ENCODE measurements at regions of chr10 and their contacts with region 1.

Region 1: DNA sequence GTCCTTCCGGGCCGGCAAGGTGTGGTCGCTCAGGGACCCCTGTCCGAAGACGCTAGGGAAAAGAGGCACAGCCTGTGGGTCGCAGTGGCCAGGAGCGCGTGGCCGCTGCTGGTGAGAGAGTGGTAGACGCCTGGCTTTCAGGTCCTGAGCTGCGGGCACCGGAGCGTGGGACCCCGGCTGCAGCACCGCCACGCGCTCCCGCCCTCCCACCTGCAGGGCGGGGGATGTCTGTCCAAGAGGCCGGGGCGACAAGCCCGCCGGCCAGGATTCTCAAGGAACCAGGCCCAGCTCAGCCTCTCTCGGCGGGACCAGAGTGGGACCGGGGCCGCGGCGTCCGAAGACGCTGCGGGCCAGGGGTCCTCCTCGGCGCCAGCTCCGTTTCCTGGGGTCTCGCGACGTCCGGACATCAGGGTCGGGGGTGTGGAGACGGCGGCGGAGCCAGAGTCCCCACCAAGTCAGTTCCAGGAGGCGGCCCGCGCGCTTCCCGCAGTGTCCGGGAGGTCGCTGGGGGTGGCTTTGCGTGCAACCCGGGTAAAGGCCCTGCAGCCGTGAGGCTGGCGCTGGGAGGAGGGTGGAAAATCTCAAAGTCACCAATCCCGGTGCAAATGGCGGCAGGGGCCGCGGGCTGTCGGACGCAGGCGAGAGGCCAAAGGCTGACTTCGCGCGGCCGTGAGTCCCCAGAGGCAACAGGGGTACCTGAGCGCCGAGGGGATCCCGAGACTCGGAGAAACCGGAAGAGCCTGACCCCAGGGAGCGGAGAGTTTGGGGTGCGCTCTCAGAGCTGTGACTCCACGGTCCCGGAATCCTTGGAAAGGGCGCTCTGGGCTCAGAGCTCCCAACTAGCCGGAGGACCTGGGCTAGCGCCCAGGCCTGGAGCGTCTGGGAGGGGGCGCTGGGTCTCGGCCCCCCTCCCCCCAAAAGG is 5.4 kb downstream of the ZNF503 start:
- DNase-seq: no peak
- ATAC-seq: peak; percentile 5; the same call in 1 of the 2 replicates
- H3K4me3 ChIP-seq: peak overlapping the region; percentile 54 to 61
- H3K27ac ChIP-seq: peak overlapping the region; percentile 74
- H3K4me1 ChIP-seq: peaks cover 9% of the 10 kb centered on the region; the same call in 1 of the 2 replicates
- H3K27me3 ChIP-seq: peaks cover 27% of the 10 kb centered on the region
- CTCF ChIP-seq: no peak

Region 2: DNA sequence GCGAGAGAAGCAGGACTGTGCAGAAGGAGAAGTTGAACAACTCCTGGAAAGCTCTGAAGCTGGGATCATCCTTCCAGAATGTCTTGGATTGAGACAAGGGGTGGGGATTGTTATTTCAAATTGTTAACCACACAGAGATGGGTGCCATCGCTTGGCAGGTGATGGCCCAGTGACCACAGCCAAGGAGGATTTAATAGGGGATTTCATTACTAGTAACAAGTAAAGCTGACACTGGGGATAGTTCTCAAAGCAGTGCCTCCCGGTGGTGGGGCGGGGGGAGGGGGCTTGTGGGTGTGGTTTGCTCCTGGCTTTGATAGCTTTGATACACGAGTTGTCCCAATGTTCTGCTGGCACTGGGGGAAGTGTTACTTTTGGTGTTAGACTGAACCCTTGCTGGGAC is 53.8 kb before region 1 on chr10:
- CTCF ChIA-PET with region 1: no interaction called
- POLR2A ChIA-PET with region 1: no interaction called
- in situ Hi-C with region 1: no loop called
- intact Hi-C with region 1: no loop called
- DNase-seq: no peak
- ATAC-seq: no peak
- H3K4me3 ChIP-seq: no peak overlapping the region
- H3K27ac ChIP-seq: no peak overlapping the region
- H3K4me1 ChIP-seq: no peaks in the 10 kb centered on the region
- H3K27me3 ChIP-seq: peaks cover 12% of the 10 kb centered on the region
- CTCF ChIP-seq: no peak

Region 3: DNA sequence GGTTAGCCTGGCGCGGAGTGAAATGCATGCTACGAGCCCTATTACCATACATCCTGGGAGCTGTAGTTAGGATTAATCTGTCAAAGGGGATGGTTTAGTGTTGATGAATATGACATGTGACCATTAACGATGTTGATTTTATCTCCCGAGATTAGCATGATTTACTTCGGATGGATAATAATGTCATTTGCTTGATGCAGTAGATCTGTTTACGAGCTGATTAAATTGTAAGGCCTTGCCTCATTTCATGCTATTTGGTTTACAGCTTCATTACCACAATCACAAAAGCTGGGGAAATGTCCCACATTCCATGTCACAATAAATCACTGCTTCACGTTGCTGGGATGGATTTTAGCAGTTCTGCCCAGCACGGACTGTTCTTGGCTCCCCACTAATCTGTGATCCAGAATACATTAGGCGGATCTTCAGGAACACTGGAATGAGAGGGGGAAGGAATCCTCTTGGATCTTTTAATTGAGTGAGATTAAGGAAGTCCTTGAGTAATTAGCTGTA is 16.9 kb before region 1 on chr10:
- CTCF ChIA-PET with region 1: no interaction called
- POLR2A ChIA-PET with region 1: interaction called, 11 read pairs
- in situ Hi-C with region 1: no loop called
- intact Hi-C with region 1: no loop called
- DNase-seq: no peak
- ATAC-seq: no peak
- H3K4me3 ChIP-seq: no peak overlapping the region
- H3K27ac ChIP-seq: no peak overlapping the region
- H3K4me1 ChIP-seq: no peaks in the 10 kb centered on the region
- H3K27me3 ChIP-seq: no peaks in the 10 kb centered on the region
- CTCF ChIP-seq: no peak